B cell (primary cell): ENCODE measurements at regions of chr3 and their contacts with region 1.

Region 1: GRCh38 chr3:32510075-32510724 is 7.5 kb upstream of the CMTM6 start:
- DNase-seq: peak; percentile 81
- ATAC-seq: peak; percentile 99
- H3K4me3 ChIP-seq: no peak overlapping the region
- H3K4me3 Mint-ChIP-seq: no peak overlapping the region
- H3K27ac ChIP-seq: no peak overlapping the region
- H3K27ac Mint-ChIP-seq: peak overlapping the region; percentile 27
- H3K4me1 ChIP-seq: no peaks in the 10 kb centered on the region
- H3K4me1 Mint-ChIP-seq: peaks cover 5% of the 10 kb centered on the region
- H3K27me3 ChIP-seq: no peaks in the 10 kb centered on the region
- H3K27me3 Mint-ChIP-seq: no peaks in the 10 kb centered on the region
- CTCF ChIP-seq: peak; percentile 92

Region 2: GRCh38 chr3:32177702-32178198 is 332.4 kb before region 1 on chr3:
- CTCF ChIA-PET with region 1: interaction called, 5 read pairs
- POLR2A ChIA-PET with region 1: no interaction called
- intact Hi-C with region 1: loop called (anchors 2 kb)
- DNase-seq: peak; percentile 53
- ATAC-seq: peak; percentile 61
- H3K4me3 ChIP-seq: peak overlapping the region in 1 of 5 experiments; percentile 2
- H3K4me3 Mint-ChIP-seq: peak overlapping the region; percentile 14
- H3K27ac ChIP-seq: no peak overlapping the region
- H3K27ac Mint-ChIP-seq: no peak overlapping the region
- H3K4me1 ChIP-seq: peaks cover 4 to 15% of the 10 kb centered on the region in 2 donors
- H3K4me1 Mint-ChIP-seq: peaks cover 21% of the 10 kb centered on the region
- H3K27me3 ChIP-seq: peaks cover 0 to 9% (median 0%) of the 10 kb centered on the region in 4 experiments
- H3K27me3 Mint-ChIP-seq: peaks cover 13% of the 10 kb centered on the region
- CTCF ChIP-seq: no peak

Region 3: GRCh38 chr3:32531010-32531647 is 20.9 kb after region 1 on chr3:
- CTCF ChIA-PET with region 1: interaction called, 10 read pairs
- POLR2A ChIA-PET with region 1: no interaction called
- intact Hi-C with region 1: no loop called
- DNase-seq: no peak
- ATAC-seq: no peak
- H3K4me3 ChIP-seq: no peak overlapping the region
- H3K4me3 Mint-ChIP-seq: no peak overlapping the region
- H3K27ac ChIP-seq: no peak overlapping the region
- H3K27ac Mint-ChIP-seq: peak overlapping the region; percentile 22
- H3K4me1 ChIP-seq: no peaks in the 10 kb centered on the region
- H3K4me1 Mint-ChIP-seq: no peaks in the 10 kb centered on the region
- H3K27me3 ChIP-seq: no peaks in the 10 kb centered on the region
- H3K27me3 Mint-ChIP-seq: no peaks in the 10 kb centered on the region
- CTCF ChIP-seq: no peak

Region 4: DNA sequence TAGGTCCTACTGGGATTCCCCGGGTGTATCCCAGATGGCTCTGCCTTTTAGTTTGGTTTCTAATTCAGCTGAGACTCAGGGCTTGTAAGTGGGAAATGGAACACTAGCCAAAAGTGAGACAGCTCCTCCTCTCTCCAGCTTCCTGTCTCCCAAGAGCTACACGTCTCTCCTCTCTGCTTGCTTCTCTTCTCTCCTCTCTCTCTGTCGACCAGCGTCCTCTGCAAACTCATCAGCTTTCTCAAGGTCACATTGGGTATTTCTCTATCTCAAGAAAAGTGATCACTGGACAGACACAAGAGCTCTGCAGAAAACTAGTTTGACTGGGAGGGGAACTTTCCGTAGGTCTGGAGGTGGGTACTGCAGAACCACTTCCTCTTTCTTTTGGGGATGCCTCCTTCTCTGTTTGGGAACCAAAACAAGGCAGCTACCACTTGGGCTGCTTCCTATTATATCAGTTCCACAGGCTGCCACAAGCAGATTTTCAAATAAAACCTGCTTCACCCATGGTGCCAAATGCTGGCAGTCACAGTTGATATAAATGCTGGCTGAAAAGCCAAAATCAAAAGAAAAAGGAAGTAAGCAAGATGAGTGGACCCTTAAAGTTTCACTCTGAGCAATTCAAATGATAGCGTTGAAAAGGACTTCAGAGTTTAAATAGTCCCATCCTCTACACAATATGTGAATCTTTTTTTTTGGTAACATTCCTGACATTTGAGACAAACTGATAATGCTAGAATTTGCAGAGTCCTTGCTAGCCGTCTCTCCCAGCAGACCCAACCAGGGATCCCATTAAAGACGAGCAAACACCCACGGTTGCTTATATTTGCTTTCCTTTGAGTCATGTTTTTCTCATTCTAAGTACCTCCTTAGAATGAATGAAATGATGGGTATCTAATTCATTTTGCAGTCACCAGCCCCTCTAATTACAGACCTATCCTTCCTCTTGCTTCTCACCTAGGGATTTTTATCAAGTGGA is 67.7 kb after region 1 on chr3:
- CTCF ChIA-PET with region 1: interaction called, 10 read pairs
- POLR2A ChIA-PET with region 1: no interaction called
- intact Hi-C with region 1: no loop called
- DNase-seq: peak; percentile 71
- ATAC-seq: peak; percentile 87
- H3K4me3 ChIP-seq: peak overlapping the region in 3 of 5 experiments; percentile 28 to 51 (median 30)
- H3K4me3 Mint-ChIP-seq: peak overlapping the region; percentile 40
- H3K27ac ChIP-seq: peak overlapping the region; percentile 22 to 66
- H3K27ac Mint-ChIP-seq: peak overlapping the region; percentile 78
- H3K4me1 ChIP-seq: peaks cover 17 to 22% of the 10 kb centered on the region in 2 donors
- H3K4me1 Mint-ChIP-seq: peaks cover 19% of the 10 kb centered on the region
- H3K27me3 ChIP-seq: no peaks in the 10 kb centered on the region
- H3K27me3 Mint-ChIP-seq: no peaks in the 10 kb centered on the region
- CTCF ChIP-seq: no peak

Region 5: GRCh38 chr3:32593903-32594525 is 83.8 kb after region 1 on chr3:
- CTCF ChIA-PET with region 1: interaction called, 29 read pairs
- POLR2A ChIA-PET with region 1: no interaction called
- intact Hi-C with region 1: loop called (anchors 1 kb)
- DNase-seq: no peak
- ATAC-seq: no peak
- H3K4me3 ChIP-seq: no peak overlapping the region
- H3K4me3 Mint-ChIP-seq: no peak overlapping the region
- H3K27ac ChIP-seq: no peak overlapping the region
- H3K27ac Mint-ChIP-seq: no peak overlapping the region
- H3K4me1 ChIP-seq: no peaks in the 10 kb centered on the region
- H3K4me1 Mint-ChIP-seq: no peaks in the 10 kb centered on the region
- H3K27me3 ChIP-seq: peaks cover 0 to 4% (median 1%) of the 10 kb centered on the region in 4 experiments
- H3K27me3 Mint-ChIP-seq: peaks cover 23% of the 10 kb centered on the region
- CTCF ChIP-seq: no peak

Region 6: GRCh38 chr3:32667122-32667521 is 156.9 kb after region 1 on chr3:
- CTCF ChIA-PET with region 1: interaction called, 29 read pairs
- POLR2A ChIA-PET with region 1: no interaction called
- intact Hi-C with region 1: loop called (anchors 1 kb)
- DNase-seq: no peak
- ATAC-seq: no peak
- H3K4me3 ChIP-seq: no peak overlapping the region
- H3K4me3 Mint-ChIP-seq: no peak overlapping the region
- H3K27ac ChIP-seq: no peak overlapping the region
- H3K27ac Mint-ChIP-seq: no peak overlapping the region
- H3K4me1 ChIP-seq: no peaks in the 10 kb centered on the region
- H3K4me1 Mint-ChIP-seq: no peaks in the 10 kb centered on the region
- H3K27me3 ChIP-seq: no peaks in the 10 kb centered on the region
- H3K27me3 Mint-ChIP-seq: peaks cover 7% of the 10 kb centered on the region
- CTCF ChIP-seq: no peak

Region 7: DNA sequence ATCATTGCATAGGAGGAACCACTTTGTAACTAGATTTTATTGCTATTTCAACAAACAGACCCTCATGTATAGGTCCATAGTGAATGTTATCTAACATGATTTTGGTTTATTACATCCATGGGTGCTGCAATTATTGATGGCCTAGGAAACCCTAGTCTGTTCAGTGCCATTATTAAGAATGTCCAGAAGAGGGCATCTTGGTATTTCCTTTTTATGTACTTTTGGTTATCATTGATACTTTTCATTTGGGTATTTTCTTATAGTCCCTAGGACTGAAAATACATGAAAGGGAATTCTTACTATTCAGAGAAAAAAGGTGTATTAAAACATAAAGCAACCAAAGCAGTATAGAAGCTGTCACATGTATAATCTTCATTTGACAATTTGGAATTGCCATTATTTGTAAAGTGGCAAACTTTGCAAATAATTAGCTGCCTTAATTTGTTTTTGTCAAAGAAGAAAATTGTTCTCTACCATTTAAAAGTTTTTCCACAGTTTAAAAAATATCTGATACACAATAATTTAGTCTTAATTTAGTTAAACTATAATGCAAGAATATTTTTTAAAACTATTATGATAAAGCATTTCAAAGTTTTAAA is 223.5 kb after region 1 on chr3:
- CTCF ChIA-PET with region 1: no interaction called
- POLR2A ChIA-PET with region 1: no interaction called
- intact Hi-C with region 1: loop called (anchors 1 kb)
- DNase-seq: peak; percentile 31
- ATAC-seq: no peak
- H3K4me3 ChIP-seq: no peak overlapping the region
- H3K4me3 Mint-ChIP-seq: no peak overlapping the region
- H3K27ac ChIP-seq: no peak overlapping the region
- H3K27ac Mint-ChIP-seq: no peak overlapping the region
- H3K4me1 ChIP-seq: no peaks in the 10 kb centered on the region
- H3K4me1 Mint-ChIP-seq: no peaks in the 10 kb centered on the region
- H3K27me3 ChIP-seq: no peaks in the 10 kb centered on the region
- H3K27me3 Mint-ChIP-seq: no peaks in the 10 kb centered on the region
- CTCF ChIP-seq: peak; percentile 75